Activated T-helper 2 cell treated with anti-CD3 and anti-CD28 coated beads, Interferon-gamma antibody, Interleukin-2, Interleukin-4, amounts not matched to agents 10 μg/mL and 5 μg/mL and 100 μg/mL, durations not matched to agents 14 hours and 24 hours and 36 hours (primary cell): ENCODE measurements at regions of chr1 and their contacts with region 1.

Region 1: GRCh38 chr1:39799770-39800470 is 11.3 kb upstream of the BMP8B start:
- DNase-seq: peak; percentile 48
- H3K4me3 Mint-ChIP-seq: peak overlapping the region; percentile 55
- H3K27ac Mint-ChIP-seq: peak overlapping the region; percentile 72
- H3K4me1 Mint-ChIP-seq: peaks cover 10% of the 10 kb centered on the region
- H3K27me3 Mint-ChIP-seq: no peaks in the 10 kb centered on the region

Region 2: DNA sequence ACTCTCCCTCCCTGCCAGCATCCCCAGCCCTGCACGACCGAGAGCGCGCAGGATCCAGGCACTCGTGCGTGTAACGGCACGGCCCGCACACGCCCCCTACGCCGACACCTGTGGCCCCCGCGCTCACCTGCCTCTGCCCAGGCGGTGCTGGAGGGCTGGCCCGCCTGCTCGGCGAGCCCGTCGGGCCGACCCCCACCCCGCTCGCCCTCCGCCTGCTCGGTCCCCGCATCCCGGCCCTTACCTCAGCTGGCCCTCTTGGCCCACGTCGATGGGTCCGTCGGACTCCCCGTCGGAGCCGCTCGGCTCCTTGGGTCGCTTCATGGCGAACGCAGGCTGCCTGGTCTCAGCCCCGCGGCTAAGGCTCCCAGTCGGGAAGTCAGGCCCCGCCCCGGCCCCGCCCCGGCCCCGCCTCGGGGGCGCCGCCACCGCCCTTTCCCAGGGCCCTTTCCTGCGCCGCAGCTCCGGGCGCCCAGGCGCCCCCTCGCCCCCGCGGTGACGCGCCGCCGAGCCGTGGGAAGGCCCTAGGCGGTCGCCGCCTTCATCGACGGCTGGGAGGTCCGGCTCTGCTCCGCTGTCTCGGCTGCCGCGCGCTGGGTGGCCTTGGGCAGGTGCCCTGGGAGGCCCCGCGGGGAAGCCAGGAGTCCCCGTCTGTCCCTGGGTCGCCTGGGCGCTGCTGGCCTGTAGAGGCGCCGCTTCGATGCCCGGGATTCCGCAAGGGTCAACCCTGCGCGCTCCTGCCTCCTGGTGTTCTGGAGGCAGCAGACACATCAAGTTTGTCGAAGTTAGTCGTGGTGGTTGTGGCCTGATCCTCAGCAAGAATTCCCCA is 160.4 kb before region 1 on chr1 and contains the start of gene HEYL:
- intact Hi-C with region 1: no loop called
- DNase-seq: peak; percentile 60
- H3K4me3 Mint-ChIP-seq: peak within 1 kb of the TSS; percentile 61
- H3K27ac Mint-ChIP-seq: no peak within 1 kb of the TSS
- H3K4me1 Mint-ChIP-seq: peaks cover 5% of the 10 kb centered on the region
- H3K27me3 Mint-ChIP-seq: peaks cover 37% of the 10 kb centered on the region
- total RNA-seq, gene HEYL: 0.73 and 0.74 TPM in 2 replicates

Region 3: DNA sequence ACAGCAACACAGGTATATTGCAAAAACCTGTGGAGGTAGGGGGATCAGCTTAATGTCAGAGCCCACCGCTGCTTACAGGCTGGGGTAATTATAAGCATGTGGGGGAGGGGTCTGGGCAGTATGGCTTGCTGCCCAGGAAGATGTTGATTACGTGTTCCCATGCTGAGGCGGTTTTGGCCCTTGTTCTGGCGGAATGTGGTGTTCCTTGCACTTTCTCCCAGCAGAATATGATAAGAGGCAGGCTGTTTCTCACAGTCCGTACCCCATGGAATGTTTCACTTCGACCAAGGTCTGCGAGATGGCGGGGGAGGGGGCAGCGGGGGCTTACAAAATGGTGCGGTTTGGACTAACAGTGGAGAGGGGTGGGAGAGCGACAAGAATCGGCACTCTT is 98.9 kb before region 1 on chr1:
- intact Hi-C with region 1: loop called (anchors 2 kb)
- DNase-seq: no peak
- H3K4me3 Mint-ChIP-seq: no peak overlapping the region
- H3K27ac Mint-ChIP-seq: no peak overlapping the region
- H3K4me1 Mint-ChIP-seq: no peaks in the 10 kb centered on the region
- H3K27me3 Mint-ChIP-seq: peaks cover 39% of the 10 kb centered on the region

Region 4: DNA sequence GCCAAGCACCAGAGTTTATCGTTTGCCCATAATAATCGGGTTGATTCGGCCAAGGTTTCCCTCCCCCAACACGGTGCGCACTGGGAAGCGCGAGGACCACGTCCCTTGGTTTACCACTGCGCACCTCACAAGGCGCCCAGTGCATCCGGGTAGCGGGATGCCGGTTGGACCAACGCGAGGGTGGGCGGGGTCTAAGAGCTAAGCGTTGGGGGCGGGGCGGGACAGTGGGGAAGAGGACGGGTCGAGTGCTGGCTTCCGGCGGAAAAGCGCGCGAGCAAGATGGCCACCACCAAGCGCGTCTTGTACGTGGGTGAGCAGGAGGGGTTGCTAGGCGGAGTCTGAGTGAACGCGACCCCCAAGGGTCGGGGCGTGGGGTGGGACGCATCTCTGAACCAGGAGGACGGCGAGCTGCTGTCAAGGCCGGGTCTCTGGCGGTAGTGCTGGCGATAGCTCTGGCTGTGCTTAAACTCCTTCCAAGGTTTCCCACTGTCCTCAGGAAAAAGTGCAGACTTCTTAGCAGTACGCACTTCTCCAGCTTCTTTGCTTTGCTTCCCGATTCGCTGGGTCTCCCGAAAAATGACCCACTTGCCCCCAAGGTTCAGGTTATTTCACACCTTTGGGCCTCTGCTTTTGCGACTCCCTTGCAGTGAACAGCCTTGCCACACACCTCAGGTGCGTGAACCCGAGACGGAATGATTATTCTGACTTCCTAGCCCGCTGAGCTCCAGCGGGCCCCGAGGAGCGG is 61.1 kb before region 1 on chr1 and contains the start of gene PPIE:
- intact Hi-C with region 1: loop called (anchors 5 kb)
- DNase-seq: peak; percentile 86
- H3K4me3 Mint-ChIP-seq: peak within 1 kb of the TSS; percentile 98
- H3K27ac Mint-ChIP-seq: peak within 1 kb of the TSS; percentile 96
- H3K4me1 Mint-ChIP-seq: peaks cover 44% of the 10 kb centered on the region
- H3K27me3 Mint-ChIP-seq: peaks cover 1% of the 10 kb centered on the region
- total RNA-seq, gene PPIE: 63.0 and 67.6 TPM in 2 replicates